ENCODE measurements at regions of chr15 and their contacts with region 1.

Region 1: DNA sequence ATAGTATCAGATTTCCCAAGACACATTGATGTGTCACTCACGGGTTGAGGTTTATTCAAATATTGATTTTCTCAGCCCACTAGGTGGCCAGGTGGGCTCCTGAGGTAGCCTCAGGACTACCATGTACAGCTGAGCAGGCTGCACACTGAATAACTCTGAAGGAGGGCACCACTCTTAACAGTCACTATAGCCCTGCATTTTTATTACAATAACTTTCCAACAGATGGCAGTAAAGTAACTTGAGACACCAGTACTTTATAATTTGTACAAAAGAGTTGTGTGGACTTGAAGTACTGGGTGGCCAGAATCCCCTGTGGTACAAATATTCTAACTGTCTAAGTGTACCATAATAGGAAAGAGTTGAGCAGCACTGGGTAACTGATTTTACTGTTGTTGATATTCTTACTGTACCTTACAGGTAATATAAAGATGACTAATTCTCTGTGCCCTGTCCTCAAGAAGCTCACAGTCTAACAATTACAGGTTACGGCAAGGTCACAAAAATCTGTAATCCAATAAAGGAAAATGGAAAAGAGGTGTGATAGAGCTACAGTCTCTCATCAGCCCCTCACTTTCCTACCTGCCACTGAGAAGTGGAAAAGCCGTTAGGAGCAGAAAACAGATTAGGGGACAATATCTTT is 76.0 kb downstream of the ETFA start:
- DNase-seq: peak; percentile 19
- H3K4me3 ChIP-seq: no peak overlapping the region
- H3K27ac ChIP-seq: no peak overlapping the region
- H3K4me1 ChIP-seq: no peaks in the 10 kb centered on the region
- H3K27me3 ChIP-seq: no peaks in the 10 kb centered on the region
- CTCF ChIP-seq: peak; percentile 29 to 43

Region 2: DNA sequence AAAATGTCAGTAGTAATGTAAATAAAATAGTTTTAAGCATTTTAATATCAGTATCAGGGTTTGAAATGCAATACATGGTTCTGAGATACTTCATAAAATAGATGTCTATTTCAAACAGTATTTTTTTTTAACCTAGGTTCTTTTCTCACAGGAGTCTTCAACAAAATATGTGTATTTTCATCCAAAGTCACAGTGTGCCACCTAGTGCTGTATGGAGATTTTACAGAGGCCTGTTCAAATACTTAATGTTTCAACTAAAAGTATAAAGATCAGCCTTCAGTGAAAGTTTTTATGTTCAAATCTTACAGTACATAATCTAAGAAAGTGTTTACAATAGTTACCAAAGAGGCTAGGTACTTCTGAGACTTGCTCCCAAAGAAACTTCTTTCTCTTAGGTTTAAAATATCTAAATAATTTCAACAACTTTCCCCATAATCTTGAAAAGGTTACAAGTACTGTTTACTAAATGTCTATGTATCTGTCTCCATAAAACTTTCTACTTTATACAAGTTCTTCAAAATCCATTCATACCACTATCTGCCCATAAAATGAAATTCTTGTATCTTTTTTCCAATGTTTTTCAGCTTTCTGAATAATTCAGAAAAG is 631.5 kb after region 1 on chr15:
- CTCF ChIA-PET with region 1: no interaction called
- dilution Hi-C with region 1: no loop called
- in situ Hi-C with region 1: no loop called
- intact Hi-C with region 1: loop called (anchors 2 kb)
- DNase-seq: peak; percentile 5
- H3K4me3 ChIP-seq: no peak overlapping the region
- H3K27ac ChIP-seq: no peak overlapping the region
- H3K4me1 ChIP-seq: no peaks in the 10 kb centered on the region
- H3K27me3 ChIP-seq: no peaks in the 10 kb centered on the region
- CTCF ChIP-seq: peak; percentile 30 to 51